PC-9 (cell line): ENCODE measurements at regions of chr19 and their contacts with region 1.

Region 1: DNA sequence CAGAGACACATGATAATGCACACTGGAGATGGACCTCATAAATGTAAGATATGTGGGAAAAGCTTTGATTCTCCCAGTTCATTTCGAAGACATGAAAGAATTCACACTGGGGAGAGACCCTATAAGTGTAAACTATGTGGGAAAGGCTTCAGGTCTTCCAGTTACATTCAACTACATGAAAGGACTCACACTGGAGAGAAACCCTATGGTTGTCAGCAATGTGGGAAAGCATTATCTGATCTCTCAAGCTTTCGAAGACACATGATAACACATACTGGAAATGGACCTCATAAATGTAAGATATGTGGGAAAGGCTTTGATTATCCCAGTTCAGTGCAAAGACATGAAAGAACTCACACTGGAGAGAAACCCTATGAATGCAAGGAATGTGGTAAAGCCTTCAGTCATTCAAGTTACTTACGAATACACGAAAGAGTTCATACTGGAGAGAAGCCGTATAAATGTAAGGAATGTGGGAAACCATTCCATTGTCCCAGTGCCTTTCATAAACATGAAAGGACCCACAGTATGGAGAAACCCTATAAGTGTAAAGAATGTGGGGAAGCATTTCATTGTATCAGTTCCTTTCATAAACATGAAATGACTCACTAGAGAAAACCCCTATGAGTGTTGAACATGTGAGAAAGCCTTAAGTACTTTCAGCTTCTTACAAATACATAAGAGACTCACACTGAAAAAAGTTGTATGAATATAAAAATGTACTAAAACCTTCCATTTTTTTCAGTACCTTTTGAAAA is 14.7 kb downstream of the ZNF441 start:
- DNase-seq: no peak
- H3K4me3 ChIP-seq: no peak overlapping the region
- H3K27ac ChIP-seq: no peak overlapping the region
- H3K4me1 ChIP-seq: 0 out of 2 replicates have a peak, but pooled peaks cover 3% of the 10 kb centered on the region
- H3K27me3 ChIP-seq: no peaks in the 10 kb centered on the region
- CTCF ChIP-seq: no peak

Region 2: GRCh38 chr19:11659612-11660011 is 121.9 kb before region 1 on chr19:
- CTCF ChIA-PET with region 1: no interaction called
- POLR2A ChIA-PET with region 1: no interaction called
- intact Hi-C with region 1: loop called (anchors 1 kb)
- DNase-seq: peak in 1 of 2 experiments; percentile 48
- H3K4me3 ChIP-seq: no peak overlapping the region
- H3K27ac ChIP-seq: no peak overlapping the region
- H3K4me1 ChIP-seq: peaks cover 10% of the 10 kb centered on the region
- H3K27me3 ChIP-seq: no peaks in the 10 kb centered on the region
- CTCF ChIP-seq: peak; percentile 78